ENCODE measurements at regions of chrX and their contacts with region 1.

Region 1: DNA sequence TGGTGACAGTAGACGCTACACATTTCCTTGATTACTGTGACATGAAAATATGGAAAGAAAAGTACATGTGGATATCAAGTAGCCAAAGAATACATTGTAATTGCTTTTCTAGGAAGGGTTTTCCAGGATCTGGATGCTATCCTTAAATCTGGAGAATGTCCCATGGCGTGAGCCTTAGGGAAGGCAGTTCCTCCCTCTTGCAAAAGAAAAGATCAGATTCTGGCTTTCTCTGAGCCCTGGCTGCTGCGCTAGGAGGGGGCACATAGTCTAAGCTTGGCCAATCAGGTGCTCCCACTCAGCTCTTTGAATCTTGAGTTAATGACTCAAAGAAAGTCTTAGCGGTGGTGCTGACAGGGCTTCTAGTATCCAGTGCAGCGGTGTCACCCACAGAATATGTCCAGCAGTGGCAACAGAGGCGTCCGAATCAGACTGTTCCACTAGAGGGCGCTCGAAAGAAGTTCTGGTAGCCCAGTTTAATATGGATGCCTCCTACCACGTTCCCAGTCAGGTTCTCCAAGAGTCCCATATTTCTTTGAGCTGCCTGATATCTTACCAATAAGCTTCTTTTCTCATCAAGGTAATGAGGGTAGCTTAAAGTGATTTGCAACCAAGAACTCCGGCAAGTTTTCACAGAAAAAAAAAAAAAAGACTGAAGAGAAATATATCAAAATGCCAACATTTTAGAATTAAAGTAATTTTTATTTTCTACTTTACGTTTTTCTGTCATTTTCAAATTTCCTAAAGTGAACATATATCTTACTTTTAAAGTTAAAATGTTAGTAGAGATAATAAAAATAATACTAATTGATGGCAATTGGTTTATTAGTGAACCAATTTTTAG is 213.4 kb upstream of the S100G start:
- DNase-seq: peak; percentile 28 to 53
- ATAC-seq: peak; percentile 88 to 95
- H3K4me3 ChIP-seq: no peak overlapping the region
- H3K27ac ChIP-seq: no peak overlapping the region
- H3K4me1 ChIP-seq: no peaks in the 10 kb centered on the region
- H3K27me3 ChIP-seq: no peaks in the 10 kb centered on the region
- CTCF ChIP-seq: peak; percentile 10 to 63 (median 46)
- POLR2A ChIP-seq: no peak

Region 2: DNA sequence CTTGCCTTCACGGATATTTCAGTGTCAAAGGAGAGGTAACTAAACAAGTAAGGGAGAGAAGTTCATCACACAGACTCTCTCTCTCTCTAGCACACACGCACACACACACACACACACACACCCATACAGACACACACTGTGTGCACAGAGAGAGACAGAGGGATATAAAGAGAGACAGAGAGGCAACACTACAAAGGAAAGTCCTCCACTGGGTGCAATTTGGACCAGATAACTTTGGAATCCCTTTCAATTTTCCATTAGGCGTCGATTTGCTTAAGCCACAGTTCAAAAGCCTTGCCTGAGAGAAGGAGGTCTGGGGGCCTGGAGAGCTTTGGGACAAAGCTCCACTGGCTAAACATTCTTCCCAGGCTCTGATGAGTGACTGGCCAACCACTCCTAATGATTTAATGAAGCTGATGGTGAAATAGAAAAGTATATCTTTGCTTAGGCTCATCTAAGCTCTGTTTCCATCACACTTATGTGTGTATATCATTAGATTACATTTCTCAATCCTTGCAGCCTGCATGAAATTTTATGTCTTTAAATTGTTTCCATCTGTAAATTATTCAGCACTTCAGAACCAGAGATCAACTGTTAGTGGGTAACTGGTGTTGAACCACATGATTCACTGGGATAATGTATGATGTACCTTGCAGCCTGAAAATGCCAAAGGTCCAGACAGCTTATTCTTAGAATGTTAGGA is 88.4 kb before region 1 on chrX:
- in situ Hi-C with region 1: loop called in 1 of 4 experiments (anchors 25 kb)
- intact Hi-C with region 1: no loop called
- DNase-seq: no peak
- ATAC-seq: no peak
- H3K4me3 ChIP-seq: no peak overlapping the region
- H3K27ac ChIP-seq: no peak overlapping the region
- H3K4me1 ChIP-seq: no peaks in the 10 kb centered on the region
- H3K27me3 ChIP-seq: no peaks in the 10 kb centered on the region
- CTCF ChIP-seq: no peak
- POLR2A ChIP-seq: no peak

Region 3: DNA sequence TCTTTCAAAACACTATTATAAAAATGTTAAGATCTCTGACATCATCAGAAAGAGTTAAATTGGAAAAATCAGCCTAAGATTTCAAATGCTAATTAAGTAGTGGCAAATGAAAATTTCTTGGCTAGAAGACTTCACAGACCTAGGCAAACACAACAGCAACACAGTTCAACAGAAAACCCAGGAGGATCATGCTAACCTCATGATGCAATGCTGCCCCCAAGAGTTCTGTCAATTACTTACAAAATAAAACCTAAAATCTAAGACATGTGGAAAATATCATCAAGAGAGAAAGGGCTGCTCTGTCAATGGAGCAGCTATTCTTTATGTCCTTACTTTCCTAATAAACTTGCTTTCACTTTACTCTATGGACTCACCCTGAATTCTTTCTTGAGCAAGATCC is 234.4 kb after region 1 on chrX:
- in situ Hi-C with region 1: loop called (anchors 10 to 25 kb)
- intact Hi-C with region 1: loop called (anchors 1 kb)
- DNase-seq: peak in 1 of 2 donors; percentile 3
- ATAC-seq: no peak
- H3K4me3 ChIP-seq: no peak overlapping the region
- H3K27ac ChIP-seq: no peak overlapping the region
- H3K4me1 ChIP-seq: no peaks in the 10 kb centered on the region
- H3K27me3 ChIP-seq: peaks cover 0 to 4% (median 0%) of the 10 kb centered on the region in 3 donors
- CTCF ChIP-seq: peak in 2 of 5 experiments; percentile 19 to 39
- POLR2A ChIP-seq: no peak

Region 4: GRCh38 chrX:16946361-16946964 is 509.9 kb after region 1 on chrX and contains the start of gene REPS2:
- in situ Hi-C with region 1: no loop called
- intact Hi-C with region 1: no loop called
- DNase-seq: peak; percentile 64 to 75
- ATAC-seq: peak; percentile 86 to 97
- H3K4me3 ChIP-seq: peak within 1 kb of the TSS; percentile 47 to 64 (median 54)
- H3K27ac ChIP-seq: peak within 1 kb of the TSS; percentile 13 to 32 (median 18)
- H3K4me1 ChIP-seq: no peaks in the 10 kb centered on the region
- H3K27me3 ChIP-seq: peaks cover 0 to 19% (median 0%) of the 10 kb centered on the region in 3 donors
- CTCF ChIP-seq: no peak
- POLR2A ChIP-seq: peak; percentile 15 to 16
- total RNA-seq, gene REPS2: 1.8 to 8.8 (median 3.2) TPM

Measured in gastrocnemius medialis (tissue), 4 donors.